ENCODE measurements at regions of chr9 and their contacts with region 1.

Region 1: GRCh38 chr9:84187090-84187489 is 153.5 kb downstream of the SLC28A3 start:
- DNase-seq: no peak
- ATAC-seq: peak; percentile 67
- H3K4me3 ChIP-seq: no peak overlapping the region
- H3K27ac ChIP-seq: peak overlapping the region; percentile 42; the same call in 1 of the 2 replicates
- H3K4me1 ChIP-seq: peaks cover 2% of the 10 kb centered on the region; the same call in 1 of the 2 replicates
- H3K27me3 ChIP-seq: peaks cover 1% of the 10 kb centered on the region; the same call in 1 of the 2 replicates
- CTCF ChIP-seq: no peak
- POLR2A ChIP-seq: no peak
- RAD21 ChIP-seq: no peak

Region 2: GRCh38 chr9:84207491-84207951 is 20.4 kb after region 1 on chr9:
- CTCF ChIA-PET with region 1: no interaction called
- POLR2A ChIA-PET with region 1: no interaction called
- dilution Hi-C with region 1: no loop called
- in situ Hi-C with region 1: no loop called
- intact Hi-C with region 1: loop called (anchors 2 kb)
- DNase-seq: no peak
- ATAC-seq: peak; percentile 42; the same call in 1 of the 2 replicates
- H3K4me3 ChIP-seq: no peak overlapping the region
- H3K27ac ChIP-seq: no peak overlapping the region; the same call in 1 of the 2 replicates
- H3K4me1 ChIP-seq: no peaks in the 10 kb centered on the region
- H3K27me3 ChIP-seq: peaks cover 3% of the 10 kb centered on the region; the same call in 1 of the 2 replicates
- CTCF ChIP-seq: no peak
- POLR2A ChIP-seq: no peak
- RAD21 ChIP-seq: no peak

Region 3: GRCh38 chr9:84238652-84239051 is 51.6 kb after region 1 on chr9:
- CTCF ChIA-PET with region 1: no interaction called
- POLR2A ChIA-PET with region 1: no interaction called
- dilution Hi-C with region 1: no loop called
- in situ Hi-C with region 1: no loop called
- intact Hi-C with region 1: loop called (anchors 5 kb)
- DNase-seq: no peak
- ATAC-seq: no peak; the same call in 1 of the 2 replicates
- H3K4me3 ChIP-seq: no peak overlapping the region
- H3K27ac ChIP-seq: no peak overlapping the region
- H3K4me1 ChIP-seq: no peaks in the 10 kb centered on the region
- H3K27me3 ChIP-seq: 0 out of 2 replicates have a peak, but pooled peaks cover 3% of the 10 kb centered on the region
- CTCF ChIP-seq: 0 out of 2 replicates have a peak, but pooled peaks have one; percentile 6
- POLR2A ChIP-seq: no peak
- RAD21 ChIP-seq: no peak